A673 (cell line): ENCODE measurements at regions of chr7 and their contacts with region 1.

Region 1: GRCh38 chr7:148914208-148914777 is 30.2 kb upstream of the EZH2 start:
- DNase-seq: peak; percentile 58
- H3K4me3 ChIP-seq: no peak overlapping the region
- H3K27ac ChIP-seq: no peak overlapping the region
- H3K4me1 ChIP-seq: peaks cover 14% of the 10 kb centered on the region
- H3K27me3 ChIP-seq: no peaks in the 10 kb centered on the region
- CTCF ChIP-seq: no peak

Region 2: GRCh38 chr7:147639037-147639436 is 1275.3 kb before region 1 on chr7:
- CTCF ChIA-PET with region 1: no interaction called
- POLR2A ChIA-PET with region 1: no interaction called
- intact Hi-C with region 1: no loop called
- DNase-seq: no peak
- H3K4me3 ChIP-seq: no peak overlapping the region
- H3K27ac ChIP-seq: no peak overlapping the region
- H3K4me1 ChIP-seq: no peaks in the 10 kb centered on the region
- H3K27me3 ChIP-seq: no peaks in the 10 kb centered on the region
- CTCF ChIP-seq: no peak

Region 3: GRCh38 chr7:148242294-148242801 is 671.9 kb before region 1 on chr7:
- CTCF ChIA-PET with region 1: no interaction called
- POLR2A ChIA-PET with region 1: no interaction called
- intact Hi-C with region 1: no loop called
- DNase-seq: peak; percentile 77
- H3K4me3 ChIP-seq: no peak overlapping the region
- H3K27ac ChIP-seq: no peak overlapping the region
- H3K4me1 ChIP-seq: no peaks in the 10 kb centered on the region
- H3K27me3 ChIP-seq: no peaks in the 10 kb centered on the region
- CTCF ChIP-seq: peak; percentile 87

Region 4: GRCh38 chr7:148394582-148394981 is 519.7 kb before region 1 on chr7:
- CTCF ChIA-PET with region 1: no interaction called
- POLR2A ChIA-PET with region 1: interaction called, 12 read pairs
- intact Hi-C with region 1: no loop called
- DNase-seq: no peak
- H3K4me3 ChIP-seq: no peak overlapping the region
- H3K27ac ChIP-seq: no peak overlapping the region
- H3K4me1 ChIP-seq: no peaks in the 10 kb centered on the region
- H3K27me3 ChIP-seq: no peaks in the 10 kb centered on the region
- CTCF ChIP-seq: no peak

Region 5: GRCh38 chr7:148700661-148701064 is 213.6 kb before region 1 on chr7:
- CTCF ChIA-PET with region 1: no interaction called
- POLR2A ChIA-PET with region 1: no interaction called
- intact Hi-C with region 1: no loop called
- DNase-seq: peak; percentile 61
- H3K4me3 ChIP-seq: peak overlapping the region; percentile 89
- H3K27ac ChIP-seq: peak overlapping the region; percentile 97
- H3K4me1 ChIP-seq: peaks cover 55% of the 10 kb centered on the region
- H3K27me3 ChIP-seq: no peaks in the 10 kb centered on the region
- CTCF ChIP-seq: no peak

Region 6: GRCh38 chr7:148877517-148877916 is 36.8 kb before region 1 on chr7:
- CTCF ChIA-PET with region 1: no interaction called
- POLR2A ChIA-PET with region 1: no interaction called
- intact Hi-C with region 1: no loop called
- DNase-seq: no peak
- H3K4me3 ChIP-seq: no peak overlapping the region
- H3K27ac ChIP-seq: no peak overlapping the region
- H3K4me1 ChIP-seq: peaks cover 27% of the 10 kb centered on the region
- H3K27me3 ChIP-seq: no peaks in the 10 kb centered on the region
- CTCF ChIP-seq: no peak